Activated T-helper 1 cell treated with anti-CD3 and anti-CD28 coated beads, Interleukin-12 subunit alpha, Interleukin-12 subunit beta, Interleukin-2, Interleukin-4 antibody, amounts not matched to agents 30 ng/mL and 10 ng/mL and 1 ng/mL, durations not matched to agents 14 hours and 24 hours and 36 hours (primary cell): ENCODE measurements at regions of chr5 and their contacts with region 1.

Region 1: GRCh38 chr5:76269932-76270610 is 133.0 kb upstream of the IQGAP2 start:
- DNase-seq: peak; percentile 33
- H3K4me3 Mint-ChIP-seq: peak overlapping the region; percentile 62
- H3K27ac Mint-ChIP-seq: peak overlapping the region; percentile 91
- H3K4me1 Mint-ChIP-seq: peaks cover 61% of the 10 kb centered on the region
- H3K27me3 Mint-ChIP-seq: no peaks in the 10 kb centered on the region

Region 2: GRCh38 chr5:76180814-76181805 is 89.0 kb before region 1 on chr5:
- intact Hi-C with region 1: loop called (anchors 5 kb)
- DNase-seq: peak; percentile 16
- H3K4me3 Mint-ChIP-seq: no peak overlapping the region
- H3K27ac Mint-ChIP-seq: no peak overlapping the region
- H3K4me1 Mint-ChIP-seq: peaks cover 10% of the 10 kb centered on the region
- H3K27me3 Mint-ChIP-seq: no peaks in the 10 kb centered on the region

Region 3: GRCh38 chr5:76303921-76304320 is 33.9 kb after region 1 on chr5:
- intact Hi-C with region 1: loop called (anchors 5 kb)
- DNase-seq: peak; percentile 33
- H3K4me3 Mint-ChIP-seq: no peak overlapping the region
- H3K27ac Mint-ChIP-seq: no peak overlapping the region
- H3K4me1 Mint-ChIP-seq: peaks cover 41% of the 10 kb centered on the region
- H3K27me3 Mint-ChIP-seq: peaks cover 5% of the 10 kb centered on the region

Region 4: DNA sequence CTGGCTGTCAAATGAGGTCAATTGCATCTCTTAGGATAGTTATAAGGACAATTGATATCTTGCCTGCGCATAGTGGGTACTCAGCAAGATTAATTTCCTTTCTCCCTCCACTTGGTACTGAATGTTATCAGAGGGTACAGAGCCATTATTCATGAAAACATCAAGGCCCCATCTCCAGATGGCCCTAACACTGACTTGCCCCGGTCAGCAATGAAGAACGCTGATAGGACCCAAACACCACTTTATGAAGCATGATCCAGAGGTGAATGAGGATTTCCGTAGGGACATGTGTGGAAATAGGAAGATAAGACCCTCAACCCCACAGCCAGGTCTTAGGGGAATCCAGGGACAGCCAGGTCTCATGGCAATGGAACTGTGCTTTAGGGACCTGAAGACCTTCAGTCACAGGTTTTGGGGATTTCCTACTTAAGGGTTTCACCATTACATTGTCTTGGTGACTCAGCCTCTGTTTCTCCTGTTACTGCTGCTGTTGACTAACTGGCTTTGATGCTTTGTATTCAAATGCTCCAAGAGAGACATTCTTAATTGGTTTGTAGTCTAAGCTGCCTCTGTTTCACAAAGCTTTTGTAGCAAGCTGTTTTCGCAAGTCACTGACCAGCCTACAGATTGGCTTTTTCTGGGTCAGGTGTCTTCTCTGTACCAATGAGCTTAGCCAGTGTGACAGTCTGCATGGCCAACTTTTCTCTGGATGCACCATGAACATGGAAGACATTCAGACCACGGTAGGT is 97.7 kb after region 1 on chr5:
- intact Hi-C with region 1: loop called (anchors 1 kb)
- DNase-seq: peak; percentile 23
- H3K4me3 Mint-ChIP-seq: no peak overlapping the region
- H3K27ac Mint-ChIP-seq: peak overlapping the region; percentile 71
- H3K4me1 Mint-ChIP-seq: peaks cover 29% of the 10 kb centered on the region
- H3K27me3 Mint-ChIP-seq: no peaks in the 10 kb centered on the region

Region 5: GRCh38 chr5:76582230-76583162 is 312.4 kb after region 1 on chr5:
- intact Hi-C with region 1: loop called (anchors 1 kb)
- DNase-seq: no peak
- H3K4me3 Mint-ChIP-seq: no peak overlapping the region
- H3K27ac Mint-ChIP-seq: no peak overlapping the region
- H3K4me1 Mint-ChIP-seq: peaks cover 33% of the 10 kb centered on the region
- H3K27me3 Mint-ChIP-seq: no peaks in the 10 kb centered on the region

Region 6: GRCh38 chr5:77030097-77031071 is 760.3 kb after region 1 on chr5 and contains the start of gene AGGF1:
- intact Hi-C with region 1: loop called (anchors 5 kb)
- DNase-seq: peak; percentile 87
- H3K4me3 Mint-ChIP-seq: peak within 1 kb of the TSS; percentile 90
- H3K27ac Mint-ChIP-seq: peak within 1 kb of the TSS; percentile 86
- H3K4me1 Mint-ChIP-seq: peaks cover 29% of the 10 kb centered on the region
- H3K27me3 Mint-ChIP-seq: peaks cover 4% of the 10 kb centered on the region
- total RNA-seq, gene AGGF1: 26.2 and 30.4 TPM in 2 replicates